AG04450 (cell line): ENCODE measurements at regions of chr7 and their contacts with region 1.

Region 1: DNA sequence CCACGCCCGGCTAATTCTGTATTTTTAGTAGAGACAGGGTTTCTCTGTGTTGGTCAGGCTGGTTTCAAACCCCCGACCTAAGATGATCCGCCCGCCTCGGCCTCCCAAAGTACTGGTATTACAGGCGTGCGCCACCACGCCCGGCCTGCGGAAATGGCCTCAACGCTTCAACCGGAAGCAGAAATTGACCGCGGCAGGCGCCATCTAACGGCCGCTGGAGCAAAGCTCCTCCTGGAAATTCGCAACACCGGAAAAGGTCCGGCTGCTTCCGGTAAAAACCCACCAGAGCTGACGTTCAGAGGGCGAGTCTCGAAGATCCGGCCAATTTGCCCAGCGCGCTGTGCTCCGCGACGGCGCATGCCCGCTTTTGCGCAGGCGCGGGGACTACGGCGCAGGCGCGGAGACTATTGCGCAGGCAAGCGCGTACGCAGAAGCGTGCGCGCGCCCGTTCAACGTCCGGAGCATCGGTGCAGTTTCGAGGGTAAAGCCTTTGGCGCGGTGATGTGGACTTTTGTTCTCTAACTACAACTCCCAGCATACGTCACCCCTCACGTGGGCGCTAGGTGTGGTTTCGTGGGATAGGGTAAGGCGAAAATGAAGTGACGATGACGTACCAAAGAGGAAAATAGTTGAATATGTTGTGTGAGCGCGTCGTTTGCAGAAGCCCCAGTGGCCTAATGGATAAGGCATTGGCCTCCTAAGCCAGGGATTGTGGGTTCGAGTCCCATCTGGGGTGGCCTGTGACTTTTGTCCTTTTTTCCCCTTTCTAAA is 915 bp upstream of the FMC1 start:
- DNase-seq: peak; percentile 99
- H3K4me3 ChIP-seq: peak overlapping the region; percentile 95
- H3K27ac ChIP-seq: peak overlapping the region; percentile 99
- H3K27me3 ChIP-seq: no peaks in the 10 kb centered on the region
- CTCF ChIP-seq: peak; percentile 77

Region 2: GRCh38 chr7:138625849-138626230 is 714.4 kb before region 1 on chr7:
- CTCF ChIA-PET with region 1: no interaction called
- POLR2A ChIA-PET with region 1: no interaction called
- DNase-seq: no peak
- H3K4me3 ChIP-seq: no peak overlapping the region
- H3K27ac ChIP-seq: no peak overlapping the region
- H3K27me3 ChIP-seq: no peaks in the 10 kb centered on the region
- CTCF ChIP-seq: no peak

Region 3: DNA sequence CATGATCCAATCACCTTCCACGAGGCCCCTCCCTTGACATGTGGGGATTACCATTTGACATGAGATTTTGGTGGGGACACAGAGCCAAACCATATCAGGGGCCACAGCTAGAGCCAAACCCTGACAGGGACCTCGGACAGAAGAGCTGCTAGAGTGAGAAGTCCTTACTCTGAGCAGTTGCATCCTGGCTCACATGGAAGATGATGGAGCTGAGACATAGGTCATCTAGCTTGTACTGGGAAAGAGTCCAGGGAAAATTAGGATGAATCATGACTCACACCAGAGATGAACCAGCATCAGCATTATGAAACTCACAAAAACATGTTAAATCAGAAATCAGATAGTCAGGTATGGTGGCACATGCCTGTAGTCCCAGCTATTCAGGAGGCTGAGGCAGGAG is 11.8 kb before region 1 on chr7:
- CTCF ChIA-PET with region 1: interaction called, 11 read pairs
- POLR2A ChIA-PET with region 1: no interaction called
- DNase-seq: peak; percentile 67
- H3K4me3 ChIP-seq: no peak overlapping the region
- H3K27ac ChIP-seq: no peak overlapping the region
- H3K27me3 ChIP-seq: no peaks in the 10 kb centered on the region
- CTCF ChIP-seq: no peak

Region 4: GRCh38 chr7:139355320-139355719 is 15.1 kb after region 1 on chr7:
- CTCF ChIA-PET with region 1: interaction called, 10 read pairs
- POLR2A ChIA-PET with region 1: interaction called, 8 read pairs
- DNase-seq: no peak
- H3K4me3 ChIP-seq: no peak overlapping the region
- H3K27ac ChIP-seq: no peak overlapping the region
- H3K27me3 ChIP-seq: no peaks in the 10 kb centered on the region
- CTCF ChIP-seq: no peak

Region 5: DNA sequence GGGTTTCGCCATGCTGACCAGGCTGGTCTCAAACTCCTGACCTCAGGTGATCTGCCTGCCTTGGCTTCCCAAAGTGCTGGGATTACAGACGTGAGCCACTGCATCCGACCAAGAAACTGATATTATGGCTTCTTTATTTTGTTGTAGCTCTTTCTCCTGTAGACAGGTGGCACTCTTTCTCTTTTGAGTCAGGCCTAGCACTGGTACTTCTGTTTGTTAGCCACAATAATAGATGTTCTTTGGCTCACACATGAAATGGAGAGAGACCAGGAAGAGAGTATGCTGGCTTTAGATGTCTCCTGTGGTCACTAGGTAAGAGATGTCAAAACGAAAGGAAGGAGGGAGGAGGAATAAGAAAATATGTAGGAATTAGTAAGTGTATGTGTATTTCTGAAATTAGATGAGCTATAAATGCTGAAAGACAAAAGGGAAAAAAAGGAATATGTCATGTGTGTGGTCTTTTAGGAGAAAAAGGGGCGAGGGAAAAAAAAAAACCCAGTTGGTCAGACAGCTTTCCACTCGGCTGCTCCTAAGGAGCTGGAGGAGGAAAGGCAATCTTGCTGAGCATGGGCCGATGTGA is 262.0 kb after region 1 on chr7:
- CTCF ChIA-PET with region 1: no interaction called
- POLR2A ChIA-PET with region 1: no interaction called
- DNase-seq: no peak
- H3K4me3 ChIP-seq: no peak overlapping the region
- H3K27ac ChIP-seq: no peak overlapping the region
- H3K27me3 ChIP-seq: no peaks in the 10 kb centered on the region
- CTCF ChIP-seq: peak; percentile 60